ENCODE measurements at regions of chr11 and their contacts with region 1.

Region 1: DNA sequence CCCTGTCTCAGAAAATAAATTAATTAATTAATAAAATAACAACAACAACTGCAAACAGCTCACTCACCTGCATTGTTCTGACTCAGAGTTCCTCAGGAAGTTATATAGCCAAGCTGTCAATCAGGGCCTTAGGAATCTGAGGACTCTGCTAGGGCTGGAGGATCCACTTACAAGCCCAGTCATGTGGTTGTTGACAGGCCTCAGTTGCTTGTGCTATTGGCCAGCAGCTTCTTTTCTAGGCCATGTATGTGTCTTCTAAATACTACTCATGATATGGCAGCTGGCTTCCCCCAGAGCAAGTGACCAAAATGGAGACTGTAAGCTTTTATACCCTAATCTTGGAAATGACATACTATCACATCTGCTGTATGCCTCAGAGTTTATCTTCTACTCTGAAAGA is 20.8 kb upstream of the ATP5MG start:
- DNase-seq: peak; percentile 31 to 61
- ATAC-seq: peak; percentile 89 to 99
- H3K4me3 ChIP-seq: no peak overlapping the region
- H3K27ac ChIP-seq: peak overlapping the region; percentile 67 to 79 (median 77)
- H3K4me1 ChIP-seq: peaks cover 17 to 21% of the 10 kb centered on the region in 2 donors
- H3K27me3 ChIP-seq: no peaks in the 10 kb centered on the region
- CTCF ChIP-seq: no peak
- POLR2A ChIP-seq: no peak

Region 2: DNA sequence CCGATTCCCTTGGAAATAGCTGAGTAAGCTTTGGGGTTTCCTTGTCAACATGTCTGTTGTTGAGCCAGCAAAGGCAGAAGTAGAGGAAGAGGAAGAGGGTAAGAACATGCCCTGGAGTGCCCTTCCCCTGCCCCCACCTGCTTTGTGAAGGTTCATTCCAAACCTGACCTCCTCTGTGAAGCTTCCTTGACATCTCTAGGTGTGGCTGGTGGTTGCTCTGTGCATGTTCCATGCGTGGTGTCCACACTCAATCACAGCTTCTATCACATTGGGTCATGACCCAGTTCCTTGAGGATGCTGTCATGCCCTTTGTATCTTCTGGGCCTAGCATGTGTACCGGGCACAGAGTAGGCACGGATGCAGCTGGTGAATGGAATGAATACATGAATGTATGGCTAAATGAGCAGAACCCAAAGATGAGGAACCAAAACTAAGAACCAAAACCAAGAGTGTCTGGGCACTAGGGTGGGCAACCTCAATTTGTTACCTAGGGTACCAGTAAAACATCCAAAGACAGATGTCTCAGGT is 480.4 kb before region 1 on chr11:
- in situ Hi-C with region 1: no loop called
- intact Hi-C with region 1: no loop called
- DNase-seq: no peak
- ATAC-seq: peak in 1 of 2 donors; percentile 49
- H3K4me3 ChIP-seq: no peak overlapping the region
- H3K27ac ChIP-seq: no peak overlapping the region
- H3K4me1 ChIP-seq: no peaks in the 10 kb centered on the region
- H3K27me3 ChIP-seq: no peaks in the 10 kb centered on the region
- CTCF ChIP-seq: no peak
- POLR2A ChIP-seq: no peak

Region 3: DNA sequence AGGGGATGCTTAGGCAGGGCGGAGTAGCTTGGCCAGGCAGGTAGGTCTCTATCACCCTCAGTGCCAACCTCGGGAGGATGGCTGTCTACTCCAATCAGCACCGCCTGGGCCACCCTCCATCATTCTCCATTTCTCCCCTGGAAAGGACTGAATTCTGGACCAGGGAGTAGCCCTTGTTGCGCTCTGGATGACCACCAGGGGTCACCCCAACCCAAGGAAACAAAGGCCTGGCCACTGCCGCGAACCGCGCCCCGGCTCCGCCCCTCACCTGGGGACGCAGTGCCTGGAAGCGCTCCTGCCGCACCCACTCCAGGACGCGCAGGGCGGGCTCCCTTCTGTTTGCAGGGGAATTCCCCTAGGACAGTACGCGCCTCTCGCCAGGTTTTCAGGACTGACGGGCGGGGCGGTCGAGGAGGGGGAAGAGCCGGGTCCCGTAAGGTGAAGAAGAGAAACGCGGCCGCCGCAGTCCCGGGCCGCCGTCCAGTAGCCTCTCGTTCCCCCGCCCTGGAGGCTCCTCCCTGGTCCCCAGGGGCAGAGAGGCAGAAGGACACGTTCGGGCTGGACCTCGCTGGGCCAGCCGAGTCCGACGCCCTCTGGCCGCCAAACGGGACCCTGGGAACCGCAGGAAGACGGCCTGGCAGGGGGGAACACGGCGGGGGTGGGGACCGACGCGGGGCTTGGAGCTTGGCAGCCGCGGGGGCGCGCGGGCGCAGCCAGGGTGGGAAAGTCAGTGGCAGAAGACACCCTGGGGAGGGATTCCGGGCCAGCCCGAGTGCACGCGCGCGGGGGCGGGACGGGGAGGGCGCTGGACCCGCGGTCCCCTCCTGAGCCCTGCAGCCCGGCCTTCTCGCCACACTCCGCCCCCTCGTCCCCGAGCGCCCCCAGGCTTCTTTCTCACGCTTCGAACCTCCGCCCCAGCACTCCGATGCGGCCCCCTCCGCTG is 235.0 kb before region 1 on chr11:
- in situ Hi-C with region 1: no loop called
- intact Hi-C with region 1: no loop called
- DNase-seq: peak; percentile 80 to 81
- ATAC-seq: peak; percentile 81 to 87
- H3K4me3 ChIP-seq: peak overlapping the region; percentile 65 to 80 (median 72)
- H3K27ac ChIP-seq: peak overlapping the region; percentile 53 to 86 (median 70)
- H3K4me1 ChIP-seq: peaks cover 12 to 13% of the 10 kb centered on the region in 2 donors
- H3K27me3 ChIP-seq: peaks cover 0 to 3% (median 0%) of the 10 kb centered on the region in 3 donors
- CTCF ChIP-seq: peak; percentile 87 to 96 (median 92)
- POLR2A ChIP-seq: no peak

Region 4: GRCh38 chr11:118415739-118416284 is 35.2 kb after region 1 on chr11:
- in situ Hi-C with region 1: no loop called
- intact Hi-C with region 1: no loop called
- DNase-seq: peak in 1 of 2 donors; percentile 35
- ATAC-seq: peak; percentile 70 to 81
- H3K4me3 ChIP-seq: no peak overlapping the region
- H3K27ac ChIP-seq: peak overlapping the region in 1 of 4 donors; percentile 22
- H3K4me1 ChIP-seq: peaks cover 0 to 5% of the 10 kb centered on the region in 2 donors
- H3K27me3 ChIP-seq: no peaks in the 10 kb centered on the region
- CTCF ChIP-seq: no peak
- POLR2A ChIP-seq: no peak

Region 5: DNA sequence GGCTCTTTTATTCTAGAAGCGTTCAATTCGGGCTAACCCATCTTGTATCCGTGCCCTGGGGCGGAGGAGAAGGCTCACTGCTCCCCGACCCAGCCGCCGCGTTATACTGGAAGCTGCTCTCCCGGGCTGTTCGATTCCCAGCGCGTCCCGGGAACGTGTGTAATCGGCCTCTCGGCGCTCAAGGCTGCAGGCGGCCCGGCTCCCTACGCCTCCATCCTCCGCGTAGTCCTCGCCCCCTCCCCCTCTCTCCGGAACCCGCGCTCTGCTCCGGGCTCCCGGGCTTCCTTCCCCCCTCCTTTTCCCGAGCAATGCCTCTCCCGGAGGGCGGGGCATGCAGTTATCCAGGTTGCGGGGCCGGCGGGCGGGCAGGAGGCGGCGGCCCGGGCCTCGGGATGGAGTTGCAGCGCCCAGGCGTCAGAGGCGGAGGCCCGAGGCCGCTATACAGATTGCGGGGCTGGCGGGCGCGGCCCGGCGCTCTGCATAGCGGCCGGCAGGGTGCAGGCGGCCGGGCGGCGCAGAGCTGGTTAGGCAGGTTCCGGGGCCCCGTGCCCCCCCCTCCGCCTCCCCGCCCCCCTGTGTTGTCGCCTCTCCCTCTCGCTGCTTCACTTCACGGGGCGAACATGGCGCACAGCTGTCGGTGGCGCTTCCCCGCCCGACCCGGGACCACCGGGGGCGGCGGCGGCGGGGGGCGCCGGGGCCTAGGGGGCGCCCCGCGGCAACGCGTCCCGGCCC is 55.5 kb after region 1 on chr11 and contains the start of gene KMT2A:
- in situ Hi-C with region 1: no loop called
- intact Hi-C with region 1: no loop called
- DNase-seq: peak; percentile 92 to 94
- ATAC-seq: peak; percentile 75 to 81
- H3K4me3 ChIP-seq: peak within 1 kb of the TSS; percentile 92 to 97 (median 96)
- H3K27ac ChIP-seq: peak within 1 kb of the TSS; percentile 86 to 92 (median 90)
- H3K4me1 ChIP-seq: peaks cover 41 to 49% of the 10 kb centered on the region in 2 donors
- H3K27me3 ChIP-seq: no peaks in the 10 kb centered on the region
- CTCF ChIP-seq: peak in 4 of 5 experiments; percentile 17 to 100 (median 100)
- POLR2A ChIP-seq: peak; percentile 30 to 46
- total RNA-seq, gene KMT2A: 24.3 to 55.6 (median 27.9) TPM

Region 6: DNA sequence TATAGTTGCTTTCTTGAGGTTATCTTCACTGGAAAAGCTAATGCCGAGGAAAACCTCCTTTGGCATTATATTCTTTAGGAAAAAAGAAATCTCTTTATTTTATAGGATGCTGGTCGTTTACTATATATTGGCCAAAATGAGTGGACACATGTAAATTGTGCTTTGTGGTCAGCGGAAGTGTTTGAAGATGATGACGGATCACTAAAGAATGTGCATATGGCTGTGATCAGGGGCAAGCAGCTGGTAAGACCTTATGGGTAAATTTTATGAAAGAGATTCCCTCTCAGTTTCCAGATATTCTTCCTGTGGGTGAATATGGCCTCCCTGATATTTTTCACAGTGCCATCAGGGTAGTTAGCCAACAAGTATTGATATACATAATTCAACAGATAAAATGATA is 117.3 kb after region 1 on chr11:
- in situ Hi-C with region 1: loop called in 2 of 4 experiments (anchors 5 to 25 kb)
- intact Hi-C with region 1: no loop called
- DNase-seq: no peak
- ATAC-seq: no peak
- H3K4me3 ChIP-seq: no peak overlapping the region
- H3K27ac ChIP-seq: no peak overlapping the region
- H3K4me1 ChIP-seq: peaks cover 0 to 6% of the 10 kb centered on the region in 2 donors
- H3K27me3 ChIP-seq: no peaks in the 10 kb centered on the region
- CTCF ChIP-seq: no peak
- POLR2A ChIP-seq: no peak